Heart right ventricle (tissue), 16 donors: ENCODE measurements at regions of chr1 and their contacts with region 1.

Region 1: DNA sequence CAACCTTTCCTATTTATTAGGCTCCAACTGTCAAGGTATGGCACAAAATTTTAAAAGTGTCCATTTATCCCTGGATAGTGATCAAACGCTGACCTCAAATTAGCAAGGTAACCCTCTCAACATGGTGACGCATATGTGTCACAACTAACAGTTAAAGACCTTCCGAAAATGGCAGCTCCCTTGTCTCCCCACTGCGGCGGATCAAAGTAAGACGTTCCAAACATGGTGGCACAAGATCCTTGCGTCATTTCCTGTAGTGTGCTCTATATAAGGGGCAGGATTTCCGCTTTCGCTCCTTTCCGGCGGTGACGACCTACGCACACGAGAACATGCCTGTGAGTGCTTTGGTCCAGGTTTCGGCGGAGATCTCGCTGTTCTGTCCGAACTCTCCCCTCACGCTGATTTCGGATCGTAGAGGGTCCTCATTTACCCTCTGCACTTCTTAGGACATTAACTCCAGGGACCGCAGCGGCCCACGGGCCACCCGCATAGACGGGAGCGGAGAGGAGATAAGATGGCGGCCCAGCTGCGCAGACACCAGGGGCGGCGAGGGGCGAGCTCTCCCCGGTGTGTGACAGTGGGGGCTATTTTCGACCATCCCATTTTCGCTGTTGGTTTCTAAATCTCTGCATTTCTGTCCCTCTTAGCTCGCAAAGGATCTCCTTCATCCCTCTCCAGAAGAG is at the start of gene RPS27:
- DNase-seq: peak; percentile 74 to 97
- ATAC-seq: peak; percentile 81 to 91 (median 86)
- H3K4me3 ChIP-seq: peak within 1 kb of the TSS; percentile 67 to 90 (median 81)
- H3K27ac ChIP-seq: peak within 1 kb of the TSS; percentile 84 to 98 (median 92)
- H3K4me1 ChIP-seq: peaks cover 4 to 59% (median 39%) of the 10 kb centered on the region in 9 donors
- H3K27me3 ChIP-seq: no peaks in the 10 kb centered on the region
- CTCF ChIP-seq: peak in 1 of 9 donors; percentile 12
- total RNA-seq, gene RPS27: 586 to 1,105 (median 715) TPM

Region 2: DNA sequence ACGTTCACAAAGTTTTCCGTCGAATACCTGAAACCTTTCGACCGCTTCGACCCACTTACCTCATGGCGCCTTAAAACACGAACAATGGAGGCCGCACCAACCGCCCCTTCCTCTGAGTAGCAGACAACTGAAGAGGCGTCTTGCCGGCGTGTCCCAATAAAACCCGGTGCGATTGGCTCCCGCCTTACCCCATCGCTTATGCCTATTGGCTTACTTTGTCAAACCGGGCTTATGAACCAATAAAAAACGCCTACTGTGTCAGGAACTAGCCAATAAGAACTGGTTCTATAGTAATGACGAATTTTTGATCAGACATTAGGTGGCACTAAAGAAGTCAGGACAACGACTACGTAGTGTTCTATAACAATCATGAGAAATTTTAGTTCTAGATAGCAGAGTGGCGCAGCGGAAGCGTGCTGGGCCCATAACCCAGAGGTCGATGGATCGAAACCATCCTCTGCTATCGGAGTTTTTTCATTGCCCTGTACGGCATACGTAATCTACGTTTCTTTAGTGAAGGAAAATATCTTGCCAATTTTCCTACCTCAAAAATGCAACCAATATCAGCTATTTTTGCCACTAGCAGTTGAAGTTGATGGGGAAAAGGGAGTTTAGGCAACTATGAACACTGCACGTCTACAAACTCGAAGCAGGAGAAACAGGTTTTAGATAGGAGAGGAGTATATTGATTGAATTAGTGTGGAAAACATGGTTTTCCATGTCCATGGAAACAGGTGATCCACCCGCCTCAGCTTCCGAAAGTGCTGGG is 319.6 kb before region 1 on chr1 and contains the start of gene ILF2:
- intact Hi-C with region 1: loop called in 7 of 10 experiments (anchors 5 to 10 kb)
- DNase-seq: peak; percentile 97 to 99
- ATAC-seq: peak; percentile 95 to 98 (median 97)
- H3K4me3 ChIP-seq: peak within 1 kb of the TSS; percentile 55 to 98 (median 80)
- H3K27ac ChIP-seq: peak within 1 kb of the TSS; percentile 21 to 92 (median 85)
- H3K4me1 ChIP-seq: peaks cover 0 to 30% (median 19%) of the 10 kb centered on the region in 9 donors
- H3K27me3 ChIP-seq: no peaks in the 10 kb centered on the region
- CTCF ChIP-seq: peak in 6 of 9 donors; percentile 19 to 50 (median 31)
- total RNA-seq, gene ILF2: 61.1 to 87.3 (median 70.8) TPM

Region 3: GRCh38 chr1:153790966-153791647 is 199.5 kb before region 1 on chr1:
- intact Hi-C with region 1: loop called in 5 of 10 experiments (anchors 2 to 5 kb)
- DNase-seq: no peak
- ATAC-seq: peak; percentile 13 to 32 (median 20)
- H3K4me3 ChIP-seq: peak overlapping the region in 8 of 10 donors; percentile 13 to 50 (median 40)
- H3K27ac ChIP-seq: peak overlapping the region; percentile 51 to 96 (median 90)
- H3K4me1 ChIP-seq: peaks cover 0 to 35% (median 24%) of the 10 kb centered on the region in 9 donors
- H3K27me3 ChIP-seq: no peaks in the 10 kb centered on the region
- CTCF ChIP-seq: no peak

Region 4: GRCh38 chr1:153958111-153958960 is 32.3 kb before region 1 on chr1 and contains the start of gene CRTC2:
- intact Hi-C with region 1: no loop called
- DNase-seq: peak; percentile 97 to 99
- ATAC-seq: peak; percentile 88 to 95 (median 90)
- H3K4me3 ChIP-seq: peak within 1 kb of the TSS; percentile 71 to 99 (median 94)
- H3K27ac ChIP-seq: peak within 1 kb of the TSS; percentile 85 to 98 (median 94)
- H3K4me1 ChIP-seq: peaks cover 16 to 78% (median 58%) of the 10 kb centered on the region in 9 donors
- H3K27me3 ChIP-seq: no peaks in the 10 kb centered on the region
- CTCF ChIP-seq: peak in 1 of 9 donors; percentile 25
- total RNA-seq, gene CRTC2: 14.6 to 25.6 (median 18.0) TPM

Region 5: DNA sequence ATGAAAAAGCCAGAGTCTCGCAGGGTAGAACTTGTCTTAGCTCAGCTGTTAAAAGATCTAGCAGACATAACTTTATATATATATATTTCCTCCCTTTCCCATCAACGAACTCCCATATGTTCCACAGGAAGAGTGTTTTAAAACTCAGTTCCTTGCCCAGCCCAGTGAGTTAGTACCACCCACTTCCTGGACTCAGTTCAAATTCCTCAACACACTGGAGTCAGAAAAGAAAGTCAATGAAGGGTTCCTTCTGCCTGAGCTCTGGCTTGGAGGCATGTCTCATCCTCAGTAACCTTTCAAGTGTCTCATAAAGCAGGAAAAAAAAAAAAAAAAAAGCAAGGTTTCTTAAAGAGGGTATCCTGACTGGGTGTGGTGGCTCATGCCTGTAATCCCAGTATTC is 185.7 kb after region 1 on chr1:
- intact Hi-C with region 1: loop called in 2 of 10 experiments (anchors 5 to 10 kb)
- DNase-seq: peak in 1 of 2 donors; percentile 64
- ATAC-seq: peak; percentile 43 to 79 (median 72)
- H3K4me3 ChIP-seq: no peak overlapping the region
- H3K27ac ChIP-seq: peak overlapping the region in 7 of 10 donors; percentile 7 to 74 (median 54)
- H3K4me1 ChIP-seq: peaks cover 11 to 64% (median 57%) of the 10 kb centered on the region in 9 donors
- H3K27me3 ChIP-seq: no peaks in the 10 kb centered on the region
- CTCF ChIP-seq: no peak

Region 6: DNA sequence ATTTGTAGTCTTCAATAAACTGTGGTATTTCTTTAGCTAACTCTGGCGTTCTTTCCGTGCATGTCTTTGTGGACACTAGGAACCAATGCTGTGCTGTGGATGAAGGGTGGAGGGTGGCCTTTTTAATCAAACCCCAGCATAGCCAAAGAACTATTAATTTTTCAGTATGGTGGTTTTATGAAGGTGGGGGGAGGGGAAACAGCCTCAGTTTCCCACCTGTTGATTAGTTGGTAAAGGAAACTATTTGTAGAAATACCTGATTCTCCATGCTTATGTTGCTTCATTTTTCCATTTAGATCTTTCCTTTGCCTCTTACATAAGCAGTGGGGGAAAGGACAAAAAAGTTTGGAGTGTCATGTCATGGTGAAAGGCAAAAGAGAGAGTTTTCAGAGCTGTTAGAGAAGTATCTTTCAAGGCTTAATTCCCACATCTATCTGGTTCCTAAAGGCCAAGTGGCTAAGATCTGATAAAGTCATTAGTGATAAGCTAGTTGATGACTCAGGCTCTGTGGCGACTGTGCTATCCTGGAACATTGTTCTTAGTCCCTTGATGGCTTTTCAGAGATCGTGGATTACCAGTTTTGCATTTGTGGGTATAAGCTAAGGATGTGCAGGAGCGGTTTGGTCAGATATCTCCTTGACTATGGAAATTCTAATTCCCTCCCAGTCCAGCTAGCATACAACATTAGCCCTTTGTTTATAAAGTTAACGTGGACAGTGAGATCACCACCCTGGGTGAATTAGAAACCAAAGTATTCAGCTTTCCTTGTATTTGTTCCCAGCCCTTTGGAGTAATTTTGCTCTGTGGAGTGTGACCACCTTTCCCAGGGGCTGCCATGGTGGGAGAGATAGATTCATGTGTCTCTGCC is 273.1 kb after region 1 on chr1:
- intact Hi-C with region 1: loop called in 1 of 10 experiments (anchors 10 kb)
- DNase-seq: no peak
- ATAC-seq: peak in 1 of 8 donors; percentile 17
- H3K4me3 ChIP-seq: no peak overlapping the region
- H3K27ac ChIP-seq: peak overlapping the region in 2 of 10 donors; percentile 7 to 19
- H3K4me1 ChIP-seq: peaks cover 0 to 14% (median 4%) of the 10 kb centered on the region in 9 donors
- H3K27me3 ChIP-seq: no peaks in the 10 kb centered on the region
- CTCF ChIP-seq: no peak